Right ventricle myocardium superior (tissue), 1 donor: ENCODE measurements at regions of chr2 and their contacts with region 1.

Region 1: GRCh38 chr2:128736689-128737545 is 418.2 kb upstream of the HS6ST1 start:
- DNase-seq: peak; percentile 88
- ATAC-seq: peak; percentile 86

Region 2: GRCh38 chr2:128786741-128787478 is 50.0 kb after region 1 on chr2:
- intact Hi-C with region 1: no loop called
- DNase-seq: no peak
- ATAC-seq: no peak

Region 3: DNA sequence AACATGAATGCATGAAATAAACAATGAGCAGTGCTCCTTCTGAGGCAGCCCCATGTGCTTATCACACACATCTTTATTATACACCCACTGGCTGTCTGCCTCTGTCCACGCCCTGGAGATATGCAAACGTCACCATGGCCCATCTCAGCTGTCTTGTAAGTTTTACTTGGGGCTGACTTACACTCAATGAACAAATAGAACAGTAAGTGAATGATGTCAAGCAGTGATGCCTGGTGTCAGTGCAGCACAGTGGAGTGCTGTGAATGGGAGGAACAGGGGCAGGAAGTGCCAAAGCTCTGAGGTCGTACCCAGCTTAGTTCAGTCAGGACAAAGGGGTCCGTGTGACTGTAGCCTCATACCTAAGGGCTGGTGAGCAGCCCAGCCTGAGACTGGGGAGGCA is 241.3 kb after region 1 on chr2:
- intact Hi-C with region 1: no loop called
- DNase-seq: no peak
- ATAC-seq: no peak

Region 4: DNA sequence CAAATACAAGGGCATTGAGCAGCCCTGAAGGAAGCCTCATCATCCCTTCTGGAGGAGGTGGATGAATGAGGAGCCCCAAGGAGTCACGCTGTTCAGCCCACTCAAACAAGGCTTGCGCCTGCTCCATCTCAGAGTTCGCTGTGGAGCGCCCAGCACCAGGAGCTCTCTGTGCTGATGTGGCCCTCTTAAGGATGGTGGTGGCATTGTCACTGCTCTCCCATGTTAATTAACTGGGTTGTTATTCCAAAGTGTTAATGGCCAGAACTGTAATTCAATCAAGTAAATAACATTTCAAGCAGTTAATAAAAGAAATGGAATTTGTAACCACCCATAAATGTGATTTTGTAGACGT is 516.5 kb after region 1 on chr2:
- intact Hi-C with region 1: loop called (anchors 10 kb)
- DNase-seq: no peak
- ATAC-seq: peak; percentile 73

Region 5: GRCh38 chr2:129396980-129397599 is 660.2 kb after region 1 on chr2:
- intact Hi-C with region 1: loop called (anchors 10 kb)
- DNase-seq: no peak
- ATAC-seq: peak; percentile 59